GM18951 (cell line): ENCODE measurements at regions of chr6 and their contacts with region 1.

Region 1: GRCh38 chr6:108235127-108235526 is 25.7 kb downstream of the SNX3 start:
- POLR2A ChIP-seq: no peak

Region 2: DNA sequence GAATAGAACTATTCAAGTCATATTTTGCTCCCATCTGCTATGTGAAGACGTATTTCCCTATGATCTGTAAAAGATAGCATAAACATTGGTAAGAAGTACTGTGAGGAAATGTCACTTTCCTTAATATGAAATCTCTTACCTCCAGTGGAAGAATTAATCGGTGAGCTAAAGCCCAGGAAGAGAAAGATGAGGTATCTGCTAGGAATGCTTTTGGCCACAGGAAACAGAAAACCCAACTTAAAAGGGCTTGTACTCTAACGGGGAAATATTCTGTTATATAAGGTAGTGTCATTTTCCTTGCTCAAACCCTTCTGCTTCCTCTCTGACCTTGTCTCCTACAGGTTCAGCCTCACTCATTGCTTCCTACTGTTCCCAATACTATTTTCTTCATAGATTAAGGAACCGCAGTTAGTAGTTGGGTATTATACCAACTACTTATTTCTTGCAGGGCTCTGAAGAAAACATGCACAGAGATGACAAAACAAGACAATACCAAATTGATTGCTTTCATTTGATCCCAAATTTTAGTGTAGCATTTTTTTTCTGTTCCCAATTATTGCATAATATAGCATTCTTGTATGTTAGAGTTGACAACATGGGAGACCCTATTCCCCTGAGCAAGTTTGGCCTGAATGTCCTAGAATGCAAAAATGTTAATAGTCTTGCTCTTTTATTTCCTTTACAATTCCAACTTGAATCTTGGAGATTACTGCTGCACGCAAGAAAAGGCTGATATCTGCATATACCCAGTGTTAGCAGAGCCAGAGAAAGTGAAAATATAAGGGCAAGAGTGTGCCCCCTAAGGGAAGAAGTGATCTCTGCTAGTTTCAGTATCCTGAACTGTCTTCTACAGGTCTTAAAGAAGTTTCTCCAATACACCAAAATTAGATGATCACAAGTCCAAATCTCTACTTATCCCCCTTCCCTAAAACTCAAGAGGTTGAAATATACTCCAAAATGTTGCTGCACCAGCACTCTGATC is 125.1 kb after region 1 on chr6:
- in situ Hi-C with region 1: loop called (anchors 10 kb)
- POLR2A ChIP-seq: no peak